Heart left ventricle (tissue), 16 donors: ENCODE measurements at regions of chr9 and their contacts with region 1.

Region 1: DNA sequence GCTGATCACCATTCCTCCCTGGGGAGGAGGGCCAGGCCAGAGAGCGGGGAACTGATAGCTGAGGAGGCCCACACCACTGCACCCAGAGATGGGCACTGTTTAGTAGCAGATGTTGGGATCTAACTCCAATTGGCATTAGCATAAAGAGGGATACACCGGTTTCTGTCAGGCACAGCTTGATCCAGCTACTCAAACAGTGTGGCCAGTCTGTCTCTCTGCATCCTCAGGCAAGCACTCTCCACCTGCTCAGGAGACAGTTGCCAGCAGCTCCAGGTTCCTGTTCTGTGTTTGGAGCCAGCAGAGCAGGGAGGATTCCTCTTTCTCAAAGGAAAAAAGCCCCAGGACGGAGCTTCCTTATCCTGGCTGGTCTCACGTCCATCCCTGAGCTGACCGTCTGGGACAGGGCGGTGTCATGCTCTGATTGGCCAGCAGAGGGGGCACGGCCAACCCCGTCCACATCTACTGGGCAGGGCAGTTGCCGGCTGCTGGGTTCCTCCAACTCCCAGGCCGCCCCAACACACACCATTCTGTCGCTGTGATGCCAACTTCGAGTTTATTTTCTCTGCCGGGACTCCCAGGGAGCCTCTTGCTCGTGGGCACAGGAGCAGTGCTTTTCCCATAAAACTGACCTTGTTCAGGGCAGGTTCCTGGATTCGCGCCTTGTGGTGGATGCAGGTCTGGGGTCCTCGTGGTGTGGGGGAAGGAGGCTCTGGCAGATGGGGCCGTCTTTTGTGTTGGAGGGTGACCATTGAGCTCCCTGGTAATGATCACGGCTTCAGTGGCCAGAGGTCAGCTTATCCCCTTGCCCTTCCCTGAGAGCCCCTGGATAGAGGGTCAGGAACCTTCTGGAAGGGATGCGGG is 47.9 kb downstream of the COL5A1 start:
- DNase-seq: peak; percentile 66 to 86 (median 70)
- ATAC-seq: peak; percentile 79 to 84 (median 82)
- H3K4me3 ChIP-seq: no peak overlapping the region
- H3K27ac ChIP-seq: peak overlapping the region in 2 of 12 donors; percentile 17 to 53
- H3K4me1 ChIP-seq: peaks cover 0 to 38% (median 8%) of the 10 kb centered on the region in 12 donors
- H3K27me3 ChIP-seq: no peaks in the 10 kb centered on the region
- CTCF ChIP-seq: peak; percentile 63 to 89 (median 80)
- POLR2A ChIP-seq: no peak

Region 2: DNA sequence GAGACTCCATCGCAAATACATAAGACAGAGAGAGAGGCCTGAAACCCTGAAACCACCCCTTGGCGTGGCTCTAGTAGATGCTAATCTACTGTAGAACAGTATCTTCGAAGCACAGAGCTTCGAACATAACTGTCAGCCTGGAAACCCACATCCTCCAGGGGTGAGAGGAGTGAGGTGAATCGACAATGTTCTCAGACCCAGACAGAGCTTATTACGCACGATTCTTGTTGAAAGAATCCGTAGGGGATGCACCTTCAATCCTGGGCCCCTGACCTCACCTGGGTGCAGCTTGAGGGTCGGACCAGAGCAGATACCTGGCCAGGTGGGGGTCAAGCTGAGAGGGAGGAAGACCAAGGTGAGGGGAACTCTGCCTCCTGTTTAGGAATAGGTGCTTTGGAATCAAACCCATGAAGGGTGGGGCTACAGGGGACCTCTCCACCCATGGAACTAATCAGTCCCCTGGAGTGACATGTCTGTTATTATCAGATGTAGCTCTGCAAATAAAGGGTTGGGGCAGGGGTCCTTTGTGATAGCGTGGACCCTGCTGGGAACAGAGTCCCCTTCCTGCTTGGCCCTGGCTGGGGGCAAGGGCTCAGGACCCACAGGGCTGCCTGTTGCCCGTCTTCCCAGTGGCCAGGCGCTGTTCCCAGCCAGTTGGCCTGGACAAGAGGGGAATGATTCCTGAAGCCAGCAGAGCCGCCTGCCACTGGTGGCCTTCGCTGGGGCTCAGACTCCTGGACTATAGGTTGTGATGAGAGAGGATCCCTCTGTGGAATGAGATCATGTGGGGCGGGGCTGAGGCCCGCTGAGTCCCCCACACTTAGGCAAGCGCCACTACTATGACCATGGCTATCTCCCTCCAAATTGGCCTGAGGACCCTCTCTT is 1012.2 kb before region 1 on chr9:
- intact Hi-C with region 1: loop called in 1 of 10 experiments (anchors 10 kb)
- DNase-seq: peak in 1 of 5 donors; percentile 11
- ATAC-seq: no peak
- H3K4me3 ChIP-seq: no peak overlapping the region
- H3K27ac ChIP-seq: peak overlapping the region in 1 of 12 donors; percentile 52
- H3K4me1 ChIP-seq: peaks cover 0 to 24% (median 16%) of the 10 kb centered on the region in 12 donors
- H3K27me3 ChIP-seq: no peaks in the 10 kb centered on the region
- CTCF ChIP-seq: no peak
- POLR2A ChIP-seq: no peak

Region 3: GRCh38 chr9:134738869-134739659 is 49.5 kb after region 1 on chr9:
- intact Hi-C with region 1: no loop called
- DNase-seq: peak; percentile 61 to 87 (median 79)
- ATAC-seq: peak; percentile 16 to 64 (median 49)
- H3K4me3 ChIP-seq: no peak overlapping the region
- H3K27ac ChIP-seq: no peak overlapping the region
- H3K4me1 ChIP-seq: peaks cover 0 to 39% (median 11%) of the 10 kb centered on the region in 12 donors
- H3K27me3 ChIP-seq: no peaks in the 10 kb centered on the region
- CTCF ChIP-seq: peak; percentile 81 to 93 (median 92)
- POLR2A ChIP-seq: no peak